ENCODE measurements at regions of chr1 and their contacts with region 1.

Region 1: GRCh38 chr1:90325168-90325567 is 330.3 kb downstream of the ZNF326 start:
- DNase-seq: no peak
- H3K4me3 ChIP-seq: no peak overlapping the region
- H3K27ac ChIP-seq: no peak overlapping the region
- H3K4me1 ChIP-seq: no peaks in the 10 kb centered on the region
- H3K27me3 ChIP-seq: no peaks in the 10 kb centered on the region
- CTCF ChIP-seq: no peak

Region 2: GRCh38 chr1:90296327-90296726 is 28.8 kb before region 1 on chr1:
- intact Hi-C with region 1: loop called (anchors 2 kb)
- DNase-seq: no peak
- H3K4me3 ChIP-seq: no peak overlapping the region
- H3K27ac ChIP-seq: no peak overlapping the region
- H3K4me1 ChIP-seq: peaks cover 0 to 5% (median 0%) of the 10 kb centered on the region in 4 donors
- H3K27me3 ChIP-seq: no peaks in the 10 kb centered on the region
- CTCF ChIP-seq: no peak

Region 3: GRCh38 chr1:90579212-90579802 is 254.1 kb after region 1 on chr1:
- intact Hi-C with region 1: loop called (anchors 10 kb)
- DNase-seq: no peak
- H3K4me3 ChIP-seq: no peak overlapping the region
- H3K27ac ChIP-seq: no peak overlapping the region
- H3K4me1 ChIP-seq: peaks cover 0 to 10% (median 0%) of the 10 kb centered on the region in 4 donors
- H3K27me3 ChIP-seq: no peaks in the 10 kb centered on the region
- CTCF ChIP-seq: peak; percentile 39 to 56

Measured in tibial artery (tissue), 4 donors.